ENCODE measurements at regions of chr1 and their contacts with region 1.

Region 1: GRCh38 chr1:176843352-176844297 is 320.9 kb downstream of the ASTN1 start:
- DNase-seq: no peak
- ATAC-seq: peak; percentile 72

Region 2: DNA sequence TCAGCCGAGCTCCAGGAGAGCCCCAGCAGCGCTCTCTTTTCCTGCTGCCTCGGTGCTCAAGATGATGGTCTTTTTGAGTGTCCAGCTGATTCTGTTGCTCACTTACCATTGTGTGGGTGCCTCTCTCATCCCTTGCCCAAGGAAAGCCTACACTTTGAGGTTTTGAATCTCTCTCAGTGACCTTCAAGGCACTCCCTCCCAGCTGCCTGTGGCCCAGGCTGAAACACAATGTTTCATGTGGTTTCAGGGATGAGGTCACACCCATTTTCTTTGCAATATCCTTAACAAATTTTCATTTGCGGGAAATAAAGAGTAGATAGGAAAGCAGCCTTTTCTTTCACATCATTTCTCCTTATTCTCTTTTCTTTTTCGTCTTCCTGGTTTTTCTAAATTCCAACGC is 1807.8 kb before region 1 on chr1:
- intact Hi-C with region 1: loop called (anchors 10 kb)
- DNase-seq: no peak
- ATAC-seq: no peak

Region 3: GRCh38 chr1:176374967-176375569 is 468.6 kb before region 1 on chr1:
- intact Hi-C with region 1: loop called (anchors 5 kb)
- DNase-seq: peak; percentile 78
- ATAC-seq: peak; percentile 56

Region 4: GRCh38 chr1:176559878-176560277 is 283.7 kb before region 1 on chr1:
- intact Hi-C with region 1: loop called (anchors 1 kb)
- DNase-seq: no peak
- ATAC-seq: peak; percentile 92

Region 5: DNA sequence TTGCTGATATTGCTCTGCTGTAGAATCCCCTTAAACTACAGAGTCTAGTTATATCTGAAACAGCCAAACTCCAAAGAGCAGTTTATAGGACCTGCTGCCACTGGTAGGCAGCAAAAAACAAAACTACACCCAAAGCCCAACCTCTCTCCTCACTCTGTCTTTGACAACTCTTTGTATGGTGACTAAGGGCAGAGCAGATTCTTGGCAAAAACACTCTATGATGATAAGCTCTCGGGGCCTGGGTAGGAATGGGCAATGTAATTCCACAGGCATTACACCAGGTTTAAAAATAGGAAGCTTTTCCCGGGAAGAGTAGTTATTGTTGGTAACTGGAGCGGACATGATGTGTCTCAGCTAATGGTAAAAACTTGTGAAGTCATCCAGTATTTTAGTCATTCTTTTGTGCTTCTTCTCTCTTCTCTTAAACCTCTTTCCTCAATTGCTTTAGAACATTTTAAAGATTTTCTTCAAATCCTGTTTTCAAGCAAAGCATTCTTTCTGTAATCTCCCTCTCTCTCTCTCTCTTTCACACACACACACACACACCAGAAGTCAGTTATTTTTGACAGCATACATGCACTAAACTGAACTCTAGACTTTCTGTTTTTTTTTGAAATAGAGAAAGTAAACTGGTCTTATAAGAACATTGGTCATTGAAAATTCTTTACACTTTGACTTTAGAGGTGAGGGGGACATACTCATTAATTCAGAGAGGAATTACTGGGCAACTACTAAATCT is 187.2 kb before region 1 on chr1:
- intact Hi-C with region 1: loop called (anchors 5 kb)
- DNase-seq: no peak
- ATAC-seq: peak; percentile 98

Region 6: GRCh38 chr1:176880954-176881595 is 37.5 kb after region 1 on chr1:
- intact Hi-C with region 1: loop called (anchors 5 kb)
- DNase-seq: peak; percentile 68
- ATAC-seq: peak; percentile 69

Region 7: GRCh38 chr1:176903474-176903873 is 59.8 kb after region 1 on chr1:
- intact Hi-C with region 1: no loop called
- DNase-seq: no peak
- ATAC-seq: no peak

Region 8: DNA sequence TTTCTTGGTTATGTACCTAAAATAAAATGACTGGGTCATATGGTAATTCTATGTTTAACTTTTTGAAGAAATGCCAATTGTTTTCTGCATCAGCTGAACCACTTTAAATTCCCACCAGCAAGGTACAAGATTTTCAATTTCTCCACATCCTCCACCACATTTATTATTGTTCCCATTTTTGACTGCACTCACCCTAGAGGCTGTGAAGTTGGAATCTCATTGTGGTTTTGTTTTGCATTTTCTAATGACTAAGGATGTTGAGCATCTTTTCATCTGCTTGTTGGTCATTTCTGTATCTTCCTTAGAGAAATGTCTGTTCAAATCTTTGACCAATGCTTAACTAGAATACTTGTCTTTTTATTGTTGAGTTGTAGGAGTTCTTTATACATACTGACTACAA is 248.4 kb after region 1 on chr1:
- intact Hi-C with region 1: no loop called
- DNase-seq: no peak
- ATAC-seq: no peak